H1 (cell line): ENCODE measurements at regions of chr15 and their contacts with region 1.

Region 1: DNA sequence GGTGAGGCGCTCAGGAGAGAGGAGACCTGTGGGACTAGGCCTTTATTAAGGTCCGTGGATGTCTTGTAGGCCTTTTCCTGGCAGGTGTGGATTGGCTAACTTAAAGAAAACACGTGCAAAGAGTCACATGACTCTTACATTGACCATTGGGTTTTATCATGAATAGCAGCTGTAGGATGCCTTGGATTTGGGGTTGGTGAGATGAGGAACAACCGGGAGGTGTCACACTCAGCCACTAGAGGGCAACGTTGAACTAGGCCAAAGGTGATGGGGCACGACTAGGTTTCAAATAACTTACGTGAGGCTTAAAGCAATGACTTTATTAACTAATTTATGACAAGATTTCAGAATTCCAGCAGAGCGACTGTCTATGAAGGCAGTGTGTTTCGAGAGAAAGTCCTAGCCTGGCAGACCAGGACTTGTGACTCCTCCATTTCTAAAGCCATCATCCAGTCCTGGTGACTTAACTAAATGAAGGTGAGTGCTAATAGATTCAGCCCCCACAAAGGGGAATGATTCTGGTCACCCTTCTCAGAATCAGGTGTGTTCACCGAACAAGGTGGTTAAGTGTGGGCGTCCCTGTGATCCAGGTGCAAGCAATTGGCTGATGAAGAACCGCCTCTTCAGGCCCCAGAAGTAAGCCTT is 345.6 kb downstream of the MCTP2 start:
- DNase-seq: peak; percentile 31 to 74
- H3K4me3 ChIP-seq: no peak overlapping the region
- H3K27ac ChIP-seq: no peak overlapping the region
- H3K4me1 ChIP-seq: no peaks in the 10 kb centered on the region
- H3K27me3 ChIP-seq: no peaks in the 10 kb centered on the region
- CTCF ChIP-seq: peak; percentile 77 to 93 (median 84)
- EP300 ChIP-seq: no peak
- POLR2A ChIP-seq: no peak
- RAD21 ChIP-seq: peak; percentile 74 to 78

Region 2: DNA sequence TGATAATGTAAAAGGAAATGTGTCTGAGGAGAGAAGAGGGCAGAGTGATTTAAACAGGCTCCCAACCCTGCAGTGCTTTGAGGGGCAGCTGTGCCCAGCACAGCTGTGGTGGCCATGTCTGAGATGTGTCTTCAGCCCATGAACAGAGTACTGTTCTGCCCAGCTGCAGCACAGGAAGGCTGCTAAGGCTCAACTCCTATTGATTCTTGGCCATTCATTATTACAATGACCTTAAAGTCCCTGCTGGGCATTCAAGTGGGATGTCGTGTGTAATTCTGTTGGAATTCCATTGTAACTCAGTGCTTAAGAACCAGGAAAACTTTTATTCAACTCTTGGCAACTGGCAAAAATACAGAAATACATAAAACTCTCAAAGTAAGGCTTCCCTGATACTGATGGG is 116.4 kb before region 1 on chr15:
- CTCF ChIA-PET with region 1: no interaction called
- POLR2A ChIA-PET with region 1: no interaction called
- DNase-seq: no peak
- H3K4me3 ChIP-seq: no peak overlapping the region
- H3K27ac ChIP-seq: no peak overlapping the region
- H3K4me1 ChIP-seq: no peaks in the 10 kb centered on the region
- H3K27me3 ChIP-seq: no peaks in the 10 kb centered on the region
- CTCF ChIP-seq: no peak
- EP300 ChIP-seq: no peak
- POLR2A ChIP-seq: no peak
- RAD21 ChIP-seq: no peak

Region 3: DNA sequence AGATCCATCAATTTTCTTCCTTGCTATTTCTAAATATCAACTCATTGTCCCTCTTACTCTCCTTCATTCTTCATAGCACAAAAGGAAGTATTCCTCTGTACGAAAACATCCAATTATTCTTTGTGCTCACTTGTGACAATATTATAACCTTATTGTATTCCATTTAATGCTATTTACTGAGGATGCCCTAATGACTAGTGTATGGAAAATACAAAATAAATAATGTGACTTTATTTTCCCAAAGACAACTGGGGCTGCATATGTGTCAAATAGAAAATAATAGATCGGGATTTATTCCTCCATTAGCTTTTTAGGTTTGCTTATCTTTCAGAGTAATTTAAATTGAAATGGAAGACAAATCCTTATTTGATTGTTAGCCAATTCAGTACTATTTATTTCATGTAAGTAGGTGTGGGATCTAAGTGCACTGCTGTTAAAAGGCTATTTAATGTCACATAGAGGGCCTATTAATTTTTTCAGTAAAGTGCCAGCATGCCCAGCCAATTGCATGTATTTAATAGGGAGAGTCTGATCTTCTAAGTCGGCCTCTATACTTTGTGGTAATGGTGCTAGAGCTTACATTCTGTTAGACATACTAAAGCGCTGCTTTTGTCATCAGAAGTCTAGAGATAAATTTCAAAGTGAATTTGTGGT is 15.8 kb before region 1 on chr15:
- CTCF ChIA-PET with region 1: interaction called, 11 read pairs
- POLR2A ChIA-PET with region 1: no interaction called
- DNase-seq: no peak
- H3K4me3 ChIP-seq: no peak overlapping the region
- H3K27ac ChIP-seq: no peak overlapping the region
- H3K4me1 ChIP-seq: no peaks in the 10 kb centered on the region; a peak in 1 of 7 replicates
- H3K27me3 ChIP-seq: no peaks in the 10 kb centered on the region
- CTCF ChIP-seq: no peak
- EP300 ChIP-seq: no peak
- POLR2A ChIP-seq: no peak
- RAD21 ChIP-seq: no peak